Caco-2 (cell line): ENCODE measurements at regions of chr15 and their contacts with region 1.

Region 1: GRCh38 chr15:90214553-90215196 is 13.5 kb downstream of the SEMA4B start:
- DNase-seq: no peak
- H3K4me3 ChIP-seq: no peak overlapping the region
- H3K4me3 Mint-ChIP-seq: no peak overlapping the region
- H3K27ac Mint-ChIP-seq: no peak overlapping the region
- H3K4me1 ChIP-seq: peaks cover 10% of the 10 kb centered on the region; the same call in 1 of the 2 replicates
- H3K4me1 Mint-ChIP-seq: no peaks in the 10 kb centered on the region
- H3K27me3 ChIP-seq: no peaks in the 10 kb centered on the region
- H3K27me3 Mint-ChIP-seq: no peaks in the 10 kb centered on the region
- CTCF ChIP-seq: peak; percentile 22 to 35

Region 2: DNA sequence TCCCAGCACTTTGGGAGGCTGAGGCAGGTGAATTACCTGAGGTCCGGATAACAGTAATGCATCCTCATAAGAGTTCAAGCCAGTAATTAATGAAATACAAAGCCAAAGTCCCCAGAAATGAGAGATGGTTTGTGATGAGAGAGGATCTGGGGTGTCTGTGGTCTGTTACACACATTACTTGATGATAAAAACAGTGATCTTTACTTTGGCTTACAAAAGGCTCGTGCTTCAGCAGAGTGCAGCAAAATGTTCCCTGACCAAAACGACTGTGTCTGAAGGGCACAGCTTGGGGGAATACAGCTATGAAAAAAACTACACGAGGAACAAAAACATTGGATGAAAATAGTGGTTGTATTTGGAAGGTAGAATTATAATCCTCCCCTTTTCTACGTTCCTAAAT is 356.0 kb after region 1 on chr15:
- CTCF ChIA-PET with region 1: interaction called, 13 read pairs
- POLR2A ChIA-PET with region 1: no interaction called
- intact Hi-C with region 1: no loop called
- DNase-seq: no peak
- H3K4me3 ChIP-seq: no peak overlapping the region
- H3K4me3 Mint-ChIP-seq: no peak overlapping the region
- H3K27ac Mint-ChIP-seq: no peak overlapping the region
- H3K4me1 ChIP-seq: no peaks in the 10 kb centered on the region
- H3K4me1 Mint-ChIP-seq: peaks cover 5% of the 10 kb centered on the region
- H3K27me3 ChIP-seq: no peaks in the 10 kb centered on the region
- H3K27me3 Mint-ChIP-seq: no peaks in the 10 kb centered on the region
- CTCF ChIP-seq: no peak